Thyroid gland (tissue), 4 donors: ENCODE measurements at regions of chr19 and their contacts with region 1.

Region 1: DNA sequence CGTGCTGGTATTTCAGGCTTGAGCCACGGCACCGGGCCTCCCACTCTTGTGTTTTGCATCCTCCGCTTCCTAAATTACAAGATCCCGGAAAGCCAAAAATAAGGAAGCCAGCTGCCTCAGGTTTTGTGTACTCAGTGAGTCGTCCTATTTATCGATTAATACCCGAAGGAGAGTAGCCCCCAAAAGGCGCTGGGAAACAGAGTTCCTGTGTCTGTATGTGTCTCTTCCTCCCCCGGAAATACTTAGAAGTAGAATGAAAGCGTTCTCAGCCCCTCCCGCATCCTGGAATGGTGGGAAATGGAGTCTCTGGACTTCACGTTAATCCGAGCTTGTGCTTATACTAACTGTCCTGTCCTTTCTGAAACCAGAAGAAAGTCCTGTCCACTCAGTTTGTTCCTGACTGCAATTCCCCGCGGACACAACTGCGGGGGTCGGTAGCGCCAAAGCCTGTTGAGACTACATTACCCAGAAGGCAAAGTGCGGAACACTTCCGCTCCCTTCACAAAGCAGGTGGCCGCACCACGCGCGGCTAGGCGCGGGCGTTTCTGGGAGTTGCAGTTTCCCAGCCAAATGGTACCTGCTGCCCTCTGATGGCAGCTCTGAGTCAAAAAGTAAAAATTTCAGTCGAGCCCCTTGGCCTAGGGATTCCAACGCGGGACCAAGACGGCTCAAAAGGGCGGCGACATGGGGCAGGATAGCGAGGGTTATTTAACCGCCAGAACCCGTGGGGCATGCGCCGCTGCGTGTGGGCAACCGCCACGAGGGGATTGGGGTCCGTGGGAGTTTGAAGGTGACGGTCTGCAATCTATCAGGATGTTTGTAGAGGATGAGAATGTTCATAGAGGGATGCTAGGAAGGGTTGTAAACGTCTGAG is 2.2 kb upstream of the GSK3A start:
- DNase-seq: peak; percentile 92 to 94
- H3K4me3 ChIP-seq: peak overlapping the region; percentile 8 to 47 (median 41)
- H3K27ac ChIP-seq: peak overlapping the region; percentile 85 to 96 (median 89)
- H3K4me1 ChIP-seq: peaks cover 27 to 43% of the 10 kb centered on the region in 2 donors
- H3K27me3 ChIP-seq: no peaks in the 10 kb centered on the region
- CTCF ChIP-seq: peak; percentile 11 to 74 (median 53)
- POLR2A ChIP-seq: peak; percentile 5 to 74

Region 2: DNA sequence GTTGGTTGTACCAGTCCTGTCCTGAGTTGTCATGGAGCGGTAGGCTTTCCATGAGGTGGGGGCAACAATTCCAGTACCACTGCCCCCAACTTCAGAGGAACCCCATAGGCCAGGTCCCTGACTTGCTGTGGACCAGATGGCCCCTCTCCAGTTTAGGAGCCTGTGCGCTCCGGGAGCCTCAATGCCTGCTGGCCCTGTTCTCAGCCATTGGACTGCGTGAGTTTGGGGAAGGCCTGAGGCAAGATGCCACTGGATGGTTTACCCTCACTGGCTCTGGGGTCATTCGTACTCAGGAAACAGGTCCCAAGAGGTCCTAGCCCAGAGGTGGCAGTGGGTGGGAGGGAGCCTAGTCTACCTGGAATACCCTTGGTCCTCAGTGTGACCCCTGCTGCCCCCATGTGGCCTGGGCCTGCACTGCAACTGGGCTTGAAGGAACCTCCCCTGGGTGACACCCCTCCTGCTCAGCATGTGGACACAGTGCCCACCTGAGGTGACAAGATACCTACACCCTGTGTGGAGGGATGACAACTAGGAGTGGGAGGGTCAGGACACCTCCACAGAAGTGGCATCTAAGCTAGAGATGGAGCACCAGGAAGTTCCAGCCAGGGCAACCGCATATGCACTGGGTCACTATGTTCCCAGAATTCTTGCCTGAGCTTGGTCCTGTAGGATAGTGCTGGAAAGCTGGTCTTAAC is 51.4 kb after region 1 on chr19:
- intact Hi-C with region 1: loop called (anchors 5 kb)
- DNase-seq: peak; percentile 85 to 87
- H3K4me3 ChIP-seq: no peak overlapping the region
- H3K27ac ChIP-seq: no peak overlapping the region
- H3K4me1 ChIP-seq: no peaks in the 10 kb centered on the region
- H3K27me3 ChIP-seq: no peaks in the 10 kb centered on the region
- CTCF ChIP-seq: peak; percentile 85 to 98 (median 90)
- POLR2A ChIP-seq: no peak